Common myeloid progenitor, CD34-positive (primary cell): ENCODE measurements at regions of chr7 and their contacts with region 1.

Region 1: GRCh38 chr7:151936207-151936606 is 20.0 kb upstream of the GALNTL5 start:
- DNase-seq: peak; percentile 45 to 85 (median 79)
- H3K4me3 ChIP-seq: peak overlapping the region in 4 of 7 experiments; percentile 10 to 57 (median 22)
- H3K27ac ChIP-seq: peak overlapping the region in 1 of 2 experiments; percentile 67
- H3K4me1 ChIP-seq: peaks cover 0 to 18% (median 15%) of the 10 kb centered on the region in 4 experiments
- H3K27me3 ChIP-seq: no peaks in the 10 kb centered on the region

Region 2: DNA sequence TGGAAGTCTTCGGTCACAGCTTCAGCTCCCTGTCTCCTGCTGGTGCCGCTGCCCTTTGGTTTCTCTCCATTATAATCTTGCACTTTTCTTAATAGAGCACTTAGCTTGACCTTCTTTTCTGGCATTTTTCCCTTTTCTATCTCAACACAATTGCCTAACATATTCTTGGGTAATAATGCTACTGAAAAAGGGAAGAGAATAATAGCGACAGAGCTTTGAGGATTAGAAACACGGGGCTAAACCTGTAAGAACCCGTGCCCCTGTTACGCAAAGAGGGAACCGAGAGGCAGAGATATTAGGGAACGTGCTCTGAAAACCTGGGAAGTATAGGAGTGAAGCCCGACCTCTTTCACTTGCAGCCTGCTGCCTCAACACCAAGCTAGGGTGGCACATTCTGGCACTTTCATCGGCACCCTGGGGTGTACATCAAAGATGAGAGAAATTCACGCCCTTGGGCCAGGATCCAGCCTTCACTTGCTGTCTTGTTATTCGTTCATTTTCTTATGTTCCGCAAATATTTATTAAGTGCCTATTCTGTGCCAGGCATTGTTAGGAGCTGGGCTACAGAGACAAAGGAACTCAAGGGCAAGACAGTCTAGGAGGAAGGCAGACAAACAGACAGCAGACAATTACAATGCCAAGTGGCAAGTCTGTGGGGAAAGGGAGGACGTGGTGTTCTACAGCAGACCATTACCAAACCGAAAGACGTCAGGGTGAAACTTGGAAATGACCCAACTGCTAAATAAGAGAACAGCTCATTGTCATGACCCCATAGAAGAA is 12.9 kb before region 1 on chr7:
- CTCF ChIA-PET with region 1: interaction called, 11 read pairs
- POLR2A ChIA-PET with region 1: no interaction called
- DNase-seq: no peak
- H3K4me3 ChIP-seq: no peak overlapping the region
- H3K27ac ChIP-seq: no peak overlapping the region
- H3K4me1 ChIP-seq: peaks cover 0 to 16% (median 11%) of the 10 kb centered on the region in 4 experiments
- H3K27me3 ChIP-seq: no peaks in the 10 kb centered on the region